Posterior cingulate gyrus (tissue), 11 donors: ENCODE measurements at regions of chr2 and their contacts with region 1.

Region 1: GRCh38 chr2:171433763-171434670 is at the starts of genes DCAF17 and METTL8:
- DNase-seq: peak; percentile 93 to 99 (median 96)

Region 2: DNA sequence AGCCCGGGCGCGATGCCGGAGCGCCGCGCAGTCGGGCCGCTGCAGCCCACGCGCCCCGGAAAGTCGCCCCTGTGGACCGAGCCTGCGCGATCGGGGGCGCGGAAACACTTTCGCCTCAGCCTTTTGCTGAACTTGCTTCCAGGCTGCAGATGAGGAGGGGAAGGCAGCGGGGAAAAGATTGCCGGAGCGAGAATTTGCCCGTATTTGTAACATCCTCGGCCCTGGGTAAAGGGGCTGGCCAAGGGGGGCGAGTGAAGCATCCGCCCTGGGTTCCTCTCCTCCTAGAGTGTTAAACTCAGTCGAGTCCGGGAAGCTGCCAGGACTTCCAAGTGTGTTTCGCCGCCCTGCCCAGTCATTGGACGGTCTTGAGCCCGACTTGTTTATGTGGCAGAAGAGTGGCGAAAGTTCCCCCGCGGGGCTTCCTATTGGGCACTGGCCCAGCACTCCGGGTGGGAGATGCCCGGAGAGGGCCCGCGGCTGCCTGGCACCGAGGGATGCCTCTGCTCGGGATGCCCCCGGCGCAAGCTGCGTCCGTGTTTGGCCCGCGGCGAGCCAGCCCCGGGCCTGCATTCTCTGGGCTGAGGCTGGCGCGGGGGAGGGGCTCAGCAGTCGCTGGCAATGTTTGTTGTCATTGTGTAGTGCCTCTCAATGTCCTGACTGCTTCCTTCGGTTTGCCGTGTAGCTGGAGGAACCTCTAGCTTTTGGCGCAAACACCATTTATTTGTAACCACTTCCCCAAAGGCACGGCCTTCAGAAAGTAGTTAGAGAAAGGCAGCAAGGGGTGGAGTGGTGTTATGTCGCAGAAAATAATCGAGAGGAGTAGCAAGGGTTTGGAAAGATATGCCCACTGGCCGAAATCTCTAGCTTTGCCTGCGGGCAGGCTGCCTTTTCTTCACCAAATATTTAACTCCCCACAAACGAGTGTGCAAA is 89.3 kb after region 1 on chr2:
- intact Hi-C with region 1: loop called (anchors 1 kb)
- DNase-seq: peak; percentile 50 to 94 (median 68)